ENCODE measurements at regions of chr1 and their contacts with region 1.

Region 1: DNA sequence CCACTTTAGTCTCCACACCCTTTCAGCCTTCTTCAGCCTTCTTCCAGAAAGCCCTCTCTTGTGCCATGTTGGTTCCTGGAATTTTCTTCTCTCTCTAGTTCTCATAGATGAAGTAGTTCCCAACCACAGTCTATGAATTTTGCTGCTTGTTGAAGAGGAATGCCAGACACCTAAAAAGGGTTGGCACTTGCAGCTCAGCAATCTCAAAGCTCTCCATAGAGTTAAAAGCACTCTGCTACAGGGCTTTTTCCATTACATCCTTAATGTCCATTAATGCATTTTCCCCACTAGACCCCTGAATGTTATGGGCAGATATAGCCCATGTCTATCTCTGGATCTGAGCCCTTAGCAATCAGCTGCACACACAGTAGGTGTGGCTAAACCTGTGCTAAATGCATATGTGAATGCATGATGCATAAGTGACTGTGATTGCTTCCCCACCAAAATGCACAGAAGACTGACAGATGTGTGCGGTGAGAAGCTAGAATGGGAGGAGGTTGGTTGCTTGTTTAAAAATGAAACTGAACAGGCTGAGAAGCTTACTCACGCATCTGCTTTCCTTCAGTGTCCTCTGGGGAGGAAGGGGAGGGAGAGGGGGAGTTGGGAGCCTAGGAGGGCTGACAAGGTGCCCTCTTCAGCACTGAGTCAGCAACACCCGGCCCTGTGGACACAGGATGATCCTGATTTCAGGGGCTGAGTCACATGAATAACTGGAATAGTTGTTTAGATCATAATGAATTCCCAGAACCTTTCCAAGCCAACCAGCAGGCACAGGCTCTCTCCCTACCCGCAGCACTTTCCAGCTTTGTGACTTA is 146.1 kb upstream of the FGGY start:
- DNase-seq: peak; percentile 96
- H3K4me3 ChIP-seq: peak overlapping the region in 2 of 4 donors; percentile 24 to 30
- H3K27ac ChIP-seq: peak overlapping the region; percentile 77 to 87 (median 82)
- H3K4me1 ChIP-seq: peaks cover 0 to 35% (median 29%) of the 10 kb centered on the region in 4 donors
- H3K27me3 ChIP-seq: no peaks in the 10 kb centered on the region
- CTCF ChIP-seq: no peak
- EP300 ChIP-seq: peak; percentile 23 to 87 (median 79)
- POLR2A ChIP-seq: no peak

Region 2: DNA sequence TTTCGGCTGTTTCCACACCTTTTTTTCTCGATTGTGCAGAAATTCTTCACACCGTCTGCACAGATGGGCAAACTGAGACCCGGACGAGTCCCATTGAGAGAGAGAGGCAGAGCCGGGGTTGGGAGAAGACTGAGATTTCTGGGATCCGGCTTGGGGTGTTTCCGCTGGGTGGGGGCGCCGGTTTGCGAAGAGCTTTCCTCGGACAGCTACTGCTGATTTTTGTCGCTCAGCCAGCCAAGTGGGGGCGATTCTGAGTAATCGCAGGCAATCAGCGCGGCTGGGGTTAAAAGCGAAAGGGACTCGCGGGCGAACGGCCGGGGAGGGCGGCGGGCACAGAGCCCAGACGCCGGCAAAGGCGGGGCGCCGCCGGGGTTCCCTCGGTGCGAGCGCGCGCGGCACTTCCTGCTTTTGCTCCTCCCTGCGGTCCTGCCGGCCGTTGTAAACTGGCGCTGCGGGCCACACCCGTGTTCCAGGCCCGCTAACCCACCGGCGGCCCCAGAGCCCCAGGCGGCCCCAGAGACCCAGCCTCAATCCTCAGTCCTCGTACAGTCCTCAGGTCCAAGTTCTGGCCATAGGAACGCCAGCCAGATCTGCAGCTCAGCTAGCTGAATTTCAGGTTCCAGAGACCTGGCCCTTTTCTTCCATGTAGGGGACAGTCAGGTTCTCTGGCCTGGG is 334.6 kb before region 1 on chr1:
- intact Hi-C with region 1: loop called (anchors 2 kb)
- DNase-seq: peak; percentile 96
- H3K4me3 ChIP-seq: peak overlapping the region; percentile 42 to 66 (median 56)
- H3K27ac ChIP-seq: peak overlapping the region; percentile 84 to 94 (median 90)
- H3K4me1 ChIP-seq: peaks cover 0 to 24% (median 15%) of the 10 kb centered on the region in 4 donors
- H3K27me3 ChIP-seq: no peaks in the 10 kb centered on the region
- CTCF ChIP-seq: no peak
- EP300 ChIP-seq: no peak
- POLR2A ChIP-seq: peak; percentile 56 to 64

Region 3: DNA sequence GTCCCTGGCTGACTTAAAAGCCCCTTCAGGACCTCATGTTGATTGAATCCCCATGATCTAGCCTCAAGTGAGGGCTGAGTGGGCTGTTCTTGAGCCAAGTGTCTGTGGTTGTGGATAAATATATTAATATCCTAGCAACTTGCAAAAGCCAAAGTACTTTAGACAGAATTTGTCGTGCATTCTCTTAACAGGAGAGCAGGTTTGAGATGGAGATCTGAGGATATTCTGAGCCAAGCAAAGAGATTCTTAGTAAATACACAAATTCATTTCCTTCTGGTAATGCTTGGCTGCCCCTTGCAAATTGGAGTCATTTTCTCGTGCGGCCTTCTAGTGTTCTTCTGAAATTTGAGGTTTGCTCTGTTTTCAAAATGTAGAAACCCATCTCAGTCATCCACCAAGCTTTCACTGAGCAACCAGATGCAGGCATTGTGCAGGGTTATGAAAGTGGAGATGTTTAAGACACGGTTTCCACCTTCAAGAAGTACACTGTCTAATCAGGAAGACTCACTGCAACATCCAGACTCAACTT is 124.8 kb before region 1 on chr1:
- intact Hi-C with region 1: no loop called
- DNase-seq: no peak
- H3K4me3 ChIP-seq: no peak overlapping the region
- H3K27ac ChIP-seq: no peak overlapping the region
- H3K4me1 ChIP-seq: no peaks in the 10 kb centered on the region
- H3K27me3 ChIP-seq: no peaks in the 10 kb centered on the region
- CTCF ChIP-seq: no peak
- EP300 ChIP-seq: no peak
- POLR2A ChIP-seq: no peak

Region 4: GRCh38 chr1:59046730-59047157 is 104.0 kb before region 1 on chr1:
- intact Hi-C with region 1: loop called (anchors 10 kb)
- DNase-seq: no peak
- H3K4me3 ChIP-seq: no peak overlapping the region
- H3K27ac ChIP-seq: peak overlapping the region in 2 of 4 donors; percentile 36 to 39
- H3K4me1 ChIP-seq: peaks cover 0 to 35% (median 29%) of the 10 kb centered on the region in 4 donors
- H3K27me3 ChIP-seq: no peaks in the 10 kb centered on the region
- CTCF ChIP-seq: no peak
- EP300 ChIP-seq: no peak
- POLR2A ChIP-seq: no peak

Region 5: DNA sequence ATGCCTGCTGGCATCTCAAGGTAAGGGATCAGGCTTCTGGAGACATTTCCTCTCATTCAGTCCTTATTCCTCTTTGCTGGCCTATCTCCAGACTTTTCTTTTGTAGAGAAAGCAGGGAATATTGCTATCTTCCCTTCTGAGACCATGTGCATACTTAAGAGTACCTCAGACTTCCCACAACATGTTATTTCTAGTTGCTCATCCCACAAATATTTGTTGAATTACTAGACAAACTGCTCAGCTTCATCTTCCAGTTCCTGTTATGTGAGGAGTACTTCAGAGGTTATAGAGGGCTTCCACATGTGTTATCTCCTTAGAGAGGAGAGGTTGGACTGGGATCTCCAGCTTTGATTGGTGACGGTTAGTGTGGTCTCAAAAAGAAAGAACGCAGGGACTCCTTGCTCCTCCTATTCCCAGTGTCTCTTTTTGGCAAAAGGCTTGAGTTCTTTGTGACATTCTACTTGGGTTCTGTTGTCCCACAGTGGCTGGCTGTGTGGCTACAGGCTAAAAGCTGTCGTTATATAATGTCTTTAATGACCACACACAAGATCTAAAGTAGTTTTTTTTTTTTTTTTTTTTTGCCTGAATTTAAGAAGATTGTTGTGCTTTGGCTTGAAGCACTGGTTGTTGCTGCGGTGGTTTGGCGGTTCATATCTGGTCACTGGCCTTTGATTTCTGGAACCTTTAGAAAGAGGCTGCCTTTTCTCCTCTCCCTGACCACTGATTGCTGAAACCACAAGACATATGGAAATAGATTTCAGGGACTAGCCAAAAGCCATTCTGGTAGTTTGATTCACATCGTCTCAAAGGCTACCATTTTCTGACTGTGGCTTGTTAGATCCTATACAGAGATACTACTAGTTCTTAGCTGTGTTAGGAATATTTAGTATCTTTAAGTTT is 224.8 kb after region 1 on chr1:
- intact Hi-C with region 1: no loop called
- DNase-seq: no peak
- H3K4me3 ChIP-seq: no peak overlapping the region
- H3K27ac ChIP-seq: peak overlapping the region in 1 of 4 donors; percentile 7
- H3K4me1 ChIP-seq: no peaks in the 10 kb centered on the region
- H3K27me3 ChIP-seq: no peaks in the 10 kb centered on the region
- CTCF ChIP-seq: no peak
- EP300 ChIP-seq: no peak
- POLR2A ChIP-seq: no peak

Region 6: DNA sequence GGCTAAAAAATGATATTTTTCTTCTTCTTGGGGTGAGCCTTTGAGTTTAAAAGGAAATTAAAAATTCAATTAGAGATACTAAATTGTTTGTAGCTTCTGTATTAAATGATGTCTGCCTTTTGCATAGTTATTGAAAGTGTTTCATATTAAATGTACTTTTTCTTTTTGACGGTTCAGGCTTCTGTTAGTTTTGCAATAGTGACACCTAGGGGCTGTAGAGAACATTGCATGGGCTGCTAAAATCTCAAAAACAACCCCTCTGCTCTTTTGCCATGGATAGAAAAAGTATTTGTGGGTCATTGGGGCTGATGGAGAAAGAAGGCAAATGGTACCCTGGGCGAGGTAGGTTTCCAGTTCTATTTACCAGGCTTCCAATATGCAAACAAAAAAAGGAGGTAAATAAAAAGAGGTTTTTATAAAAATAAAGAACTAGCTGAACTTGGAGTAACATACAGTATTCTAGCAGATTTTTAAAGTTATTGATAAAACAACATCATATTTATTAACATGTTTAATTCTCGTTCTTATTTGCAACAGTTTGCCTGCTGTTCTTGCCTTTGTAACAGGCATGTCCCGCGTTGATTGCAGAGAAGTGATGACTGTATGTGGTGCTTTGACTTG is 548.6 kb after region 1 on chr1:
- intact Hi-C with region 1: loop called (anchors 5 kb)
- DNase-seq: no peak
- H3K4me3 ChIP-seq: no peak overlapping the region
- H3K27ac ChIP-seq: peak overlapping the region in 3 of 4 donors; percentile 24 to 56 (median 51)
- H3K4me1 ChIP-seq: peaks cover 0 to 64% (median 44%) of the 10 kb centered on the region in 4 donors
- H3K27me3 ChIP-seq: no peaks in the 10 kb centered on the region
- CTCF ChIP-seq: peak; percentile 84 to 96 (median 96)
- EP300 ChIP-seq: no peak
- POLR2A ChIP-seq: no peak

Measured in sigmoid colon (tissue), 7 donors.